Posterior cingulate gyrus (tissue), 11 donors: ENCODE measurements at regions of chr7 and their contacts with region 1.

Region 1: GRCh38 chr7:2567679-2568278 is 9.0 kb downstream of the IQCE start:
- DNase-seq: peak; percentile 43 to 94 (median 61)

Region 2: GRCh38 chr7:2613931-2614600 is 46.3 kb after region 1 on chr7:
- intact Hi-C with region 1: loop called (anchors 10 kb)
- DNase-seq: peak in 3 of 10 donors; percentile 57 to 90 (median 77)

Region 3: DNA sequence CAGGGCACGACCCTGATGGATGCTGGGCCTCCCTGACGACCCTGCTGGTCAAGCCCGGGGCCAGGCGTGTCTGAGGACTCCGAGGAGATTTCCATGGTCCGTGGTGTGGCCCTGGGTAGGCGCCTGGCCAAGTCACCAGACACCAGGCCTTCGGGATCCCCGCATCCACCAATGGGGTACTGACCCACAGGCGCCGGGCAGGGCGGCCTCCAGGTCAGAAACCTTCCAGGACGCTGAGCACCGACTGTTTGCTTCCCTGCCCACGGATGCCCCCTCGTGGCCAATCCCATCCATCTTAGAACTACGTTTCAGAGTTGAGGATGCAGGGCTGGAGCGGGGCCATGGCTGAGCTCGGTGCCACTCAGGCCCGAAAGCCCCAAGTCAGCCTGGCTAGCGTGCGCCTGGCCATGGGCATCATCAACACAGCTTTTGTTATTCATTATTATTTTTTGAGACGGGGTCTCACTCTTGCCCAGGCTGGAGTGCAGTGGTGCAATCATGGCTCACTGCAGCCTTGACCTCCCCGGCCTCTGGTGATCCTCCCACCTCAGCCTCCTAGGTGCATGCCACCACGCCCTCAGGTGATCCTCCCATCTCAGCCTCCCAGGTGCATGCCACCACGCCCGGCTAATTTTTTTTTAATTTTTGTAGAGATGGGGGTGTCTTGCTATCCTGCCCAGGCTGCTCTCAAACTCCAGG is 113.2 kb after region 1 on chr7:
- intact Hi-C with region 1: loop called (anchors 5 kb)
- DNase-seq: peak; percentile 71 to 97 (median 89)

Region 4: DNA sequence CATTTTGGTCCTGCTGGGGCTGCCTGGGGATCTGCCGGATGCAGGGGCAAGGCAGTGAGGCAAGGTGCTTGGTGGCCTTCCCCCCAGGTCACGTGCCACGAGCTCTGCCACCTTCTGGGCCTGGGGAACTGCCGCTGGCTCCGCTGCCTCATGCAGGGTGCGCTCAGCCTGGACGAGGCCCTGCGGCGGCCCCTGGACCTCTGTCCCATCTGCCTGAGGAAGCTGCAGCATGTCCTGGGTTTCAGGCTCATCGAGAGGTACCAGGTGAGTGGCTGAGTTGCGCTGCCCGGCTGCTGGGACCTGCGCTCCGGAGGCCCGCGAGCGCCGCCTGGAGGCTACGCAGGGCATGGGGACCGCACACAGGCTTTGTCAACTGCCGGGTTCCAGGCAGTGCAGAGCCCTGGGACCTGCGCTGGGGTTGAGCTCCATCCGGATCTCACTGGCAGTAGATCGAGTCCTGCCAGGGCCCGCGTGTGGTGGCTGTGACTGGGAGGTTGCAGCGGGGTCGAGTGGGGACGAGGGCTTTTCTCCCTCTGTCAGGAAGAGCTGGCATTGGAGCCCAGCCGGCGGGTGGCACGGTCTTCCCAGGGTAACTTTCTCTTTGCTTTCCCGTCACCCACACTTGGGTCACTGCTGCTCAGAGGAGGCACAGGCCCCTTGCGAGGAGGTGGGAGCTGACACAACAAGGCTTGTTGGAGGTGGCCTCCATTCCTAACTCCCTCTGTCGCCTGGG is 141.9 kb after region 1 on chr7:
- intact Hi-C with region 1: loop called (anchors 2 kb)
- DNase-seq: peak in 9 of 10 donors; percentile 36 to 97 (median 66)